HCT116 (cell line): ENCODE measurements at regions of chr6 and their contacts with region 1.

Region 1: DNA sequence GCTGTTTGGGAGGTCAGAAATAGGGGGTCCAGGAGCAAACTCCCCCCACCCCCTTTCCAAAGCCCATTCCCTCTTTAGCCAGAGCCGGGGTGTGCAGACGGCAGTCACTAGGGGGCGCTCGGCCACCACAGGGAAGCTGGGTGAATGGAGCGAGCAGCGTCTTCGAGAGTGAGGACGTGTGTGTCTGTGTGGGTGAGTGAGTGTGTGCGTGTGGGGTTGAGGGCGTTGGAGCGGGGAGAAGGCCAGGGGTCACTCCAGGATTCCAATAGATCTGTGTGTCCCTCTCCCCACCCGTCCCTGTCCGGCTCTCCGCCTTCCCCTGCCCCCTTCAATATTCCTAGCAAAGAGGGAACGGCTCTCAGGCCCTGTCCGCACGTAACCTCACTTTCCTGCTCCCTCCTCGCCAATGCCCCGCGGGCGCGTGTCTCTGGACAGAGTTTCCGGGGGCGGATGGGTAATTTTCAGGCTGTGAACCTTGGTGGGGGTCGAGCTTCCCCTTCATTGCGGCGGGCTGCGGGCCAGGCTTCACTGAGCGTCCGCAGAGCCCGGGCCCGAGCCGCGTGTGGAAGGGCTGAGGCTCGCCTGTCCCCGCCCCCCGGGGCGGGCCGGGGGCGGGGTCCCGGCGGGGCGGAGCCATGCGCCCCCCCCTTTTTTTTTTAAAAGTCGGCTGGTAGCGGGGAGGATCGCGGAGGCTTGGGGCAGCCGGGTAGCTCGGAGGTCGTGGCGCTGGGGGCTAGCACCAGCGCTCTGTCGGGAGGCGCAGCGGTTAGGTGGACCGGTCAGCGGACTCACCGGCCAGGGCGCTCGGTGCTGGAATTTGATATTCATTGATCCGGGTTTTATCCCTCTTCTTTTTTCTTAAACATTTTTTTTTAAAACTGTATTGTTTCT is at the start of gene VEGFA:
- DNase-seq: peak; percentile 68
- ATAC-seq: peak; percentile 63
- H3K4me3 ChIP-seq: peak within 1 kb of the TSS; percentile 93
- H3K27ac ChIP-seq: peak within 1 kb of the TSS; percentile 95
- H3K4me1 ChIP-seq: peaks cover 25 to 37% of the 10 kb centered on the region in 2 experiments
- H3K27me3 ChIP-seq: no peaks in the 10 kb centered on the region
- CTCF ChIP-seq: peak in 2 of 3 experiments; percentile 97; a peak in 4 of 6 replicates
- POLR2A ChIP-seq: peak; percentile 98
- RAD21 ChIP-seq: no peak
- total RNA-seq, gene VEGFA: 112 TPM

Region 2: GRCh38 chr6:43723737-43724295 is 46.0 kb before region 1 on chr6:
- CTCF ChIA-PET with region 1: interaction called, 11 read pairs
- POLR2A ChIA-PET with region 1: interaction called, 9 read pairs
- RAD21 ChIA-PET with region 1: interaction called, 3 to 4 read pairs
- intact Hi-C with region 1: no loop called
- DNase-seq: peak; percentile 79
- ATAC-seq: peak; percentile 96
- H3K4me3 ChIP-seq: no peak overlapping the region
- H3K27ac ChIP-seq: no peak overlapping the region
- H3K4me1 ChIP-seq: peaks cover 23 to 27% of the 10 kb centered on the region in 2 experiments
- H3K27me3 ChIP-seq: no peaks in the 10 kb centered on the region
- CTCF ChIP-seq: peak; percentile 67 to 80 (median 77)
- POLR2A ChIP-seq: no peak
- RAD21 ChIP-seq: peak; percentile 86

Region 3: GRCh38 chr6:43817192-43817591 is 47.4 kb after region 1 on chr6:
- CTCF ChIA-PET with region 1: interaction called, 8 read pairs
- POLR2A ChIA-PET with region 1: interaction called, 5 read pairs
- RAD21 ChIA-PET with region 1: no interaction called
- intact Hi-C with region 1: loop called (anchors 2 kb)
- DNase-seq: peak; percentile 37
- ATAC-seq: peak; percentile 100
- H3K4me3 ChIP-seq: no peak overlapping the region
- H3K27ac ChIP-seq: peak overlapping the region; percentile 27; the same call in 1 of the 2 replicates
- H3K4me1 ChIP-seq: peaks cover 3 to 22% of the 10 kb centered on the region in 2 experiments; a peak in 3 of 4 replicates
- H3K27me3 ChIP-seq: no peaks in the 10 kb centered on the region
- CTCF ChIP-seq: peak; percentile 60 to 74 (median 69)
- POLR2A ChIP-seq: no peak
- RAD21 ChIP-seq: peak; percentile 73

Region 4: DNA sequence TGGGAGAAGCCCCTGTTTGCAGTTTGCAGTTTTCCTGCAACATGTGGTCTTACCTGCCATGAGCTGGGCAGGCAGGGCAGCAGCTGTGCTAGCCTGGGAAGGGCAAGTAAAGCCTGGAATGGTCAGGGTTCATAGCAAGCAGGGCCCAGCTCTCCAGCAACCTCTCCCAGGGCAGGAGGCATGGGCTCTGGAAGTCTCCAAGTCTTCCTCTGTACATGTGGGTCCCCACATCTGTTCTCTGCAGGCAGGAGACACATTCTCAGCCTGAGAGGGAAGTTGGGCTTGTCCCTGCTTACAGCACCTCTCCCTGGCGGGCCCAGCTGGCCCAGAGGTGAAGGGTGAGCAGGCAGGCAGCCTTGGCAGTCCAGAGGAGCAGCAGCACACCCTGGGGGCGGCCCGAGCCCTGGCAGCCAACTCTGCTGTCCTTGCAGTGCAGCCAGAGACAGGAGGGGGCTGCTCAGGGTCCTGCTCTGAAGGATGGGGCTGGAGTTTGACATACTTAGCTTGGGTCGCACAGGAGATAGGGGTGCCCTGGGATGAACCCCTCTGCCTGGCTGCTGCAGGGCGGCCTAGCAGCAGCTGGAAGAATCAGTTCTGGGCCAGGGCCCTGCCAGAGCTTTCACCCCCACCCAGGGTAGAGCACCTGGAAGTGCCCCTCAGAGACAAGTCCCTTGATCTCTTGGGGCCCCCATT is 181.4 kb after region 1 on chr6:
- CTCF ChIA-PET with region 1: interaction called, 11 read pairs
- POLR2A ChIA-PET with region 1: interaction called, 8 read pairs
- RAD21 ChIA-PET with region 1: interaction called, 3 read pairs
- intact Hi-C with region 1: loop called (anchors 1 kb)
- DNase-seq: peak; percentile 10
- ATAC-seq: peak; percentile 66; the same call in 1 of the 2 replicates
- H3K4me3 ChIP-seq: no peak overlapping the region
- H3K27ac ChIP-seq: no peak overlapping the region
- H3K4me1 ChIP-seq: no peaks in the 10 kb centered on the region
- H3K27me3 ChIP-seq: no peaks in the 10 kb centered on the region
- CTCF ChIP-seq: peak; percentile 41 to 85 (median 43)
- POLR2A ChIP-seq: no peak
- RAD21 ChIP-seq: peak; percentile 87

Region 5: GRCh38 chr6:44064089-44064947 is 294.5 kb after region 1 on chr6:
- CTCF ChIA-PET with region 1: interaction called, 10 read pairs
- POLR2A ChIA-PET with region 1: interaction called, 7 read pairs
- RAD21 ChIA-PET with region 1: no interaction called
- intact Hi-C with region 1: no loop called
- DNase-seq: no peak
- ATAC-seq: peak; percentile 54
- H3K4me3 ChIP-seq: no peak overlapping the region
- H3K27ac ChIP-seq: no peak overlapping the region
- H3K4me1 ChIP-seq: peaks cover 0 to 38% of the 10 kb centered on the region in 2 experiments; a peak in 2 of 4 replicates
- H3K27me3 ChIP-seq: no peaks in the 10 kb centered on the region
- CTCF ChIP-seq: no peak
- POLR2A ChIP-seq: no peak
- RAD21 ChIP-seq: no peak